ENCODE measurements at regions of chr2 and their contacts with region 1.

Region 1: DNA sequence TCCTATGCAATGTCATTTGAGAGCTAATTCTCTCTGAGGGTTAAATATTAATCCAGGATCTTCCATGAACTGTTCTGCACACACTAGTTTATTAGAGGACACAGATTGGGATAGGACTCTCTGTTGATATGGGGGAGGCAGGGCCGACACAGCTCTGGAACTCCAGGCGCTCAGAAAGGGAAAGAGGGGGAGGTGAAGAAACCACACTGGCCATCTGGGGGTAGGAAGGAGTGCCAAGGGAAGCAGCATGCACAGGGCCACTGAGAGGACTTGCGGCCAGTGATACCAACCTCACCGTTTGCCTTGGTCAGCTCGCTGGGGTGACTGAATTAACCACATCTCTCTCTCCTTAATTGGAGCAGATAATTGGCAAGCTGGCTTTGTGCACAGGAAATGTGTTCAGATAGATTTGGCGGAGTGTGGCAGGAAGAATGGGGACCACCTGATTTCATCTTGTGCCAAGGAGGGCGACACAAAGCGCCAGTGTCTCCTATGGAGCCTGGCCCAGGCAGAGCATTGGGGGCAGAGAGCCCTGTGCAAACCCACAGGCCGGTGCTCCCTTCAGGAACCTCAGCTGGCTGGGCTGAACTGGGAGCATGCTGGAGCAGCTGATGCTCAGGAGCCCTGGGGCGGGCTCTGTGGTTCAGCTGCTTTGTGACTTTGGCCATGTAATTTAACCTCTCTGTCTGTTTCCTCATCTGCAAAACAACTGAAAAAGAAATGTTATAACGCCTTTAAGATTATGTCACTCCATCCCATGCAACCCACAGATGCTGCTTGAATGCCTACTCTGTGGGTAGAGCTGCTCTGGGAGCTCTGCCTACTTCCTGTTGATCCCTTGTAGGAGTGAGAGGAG is 114.7 kb upstream of the STON1 start:
- DNase-seq: no peak
- ATAC-seq: no peak
- H3K4me3 ChIP-seq: no peak overlapping the region
- H3K27ac ChIP-seq: no peak overlapping the region
- H3K4me1 ChIP-seq: no peaks in the 10 kb centered on the region
- H3K27me3 ChIP-seq: no peaks in the 10 kb centered on the region
- CTCF ChIP-seq: no peak
- POLR2A ChIP-seq: no peak

Region 2: GRCh38 chr2:48116497-48116896 is 298.7 kb before region 1 on chr2:
- intact Hi-C with region 1: loop called (anchors 5 kb)
- DNase-seq: no peak
- ATAC-seq: no peak
- H3K4me3 ChIP-seq: no peak overlapping the region
- H3K27ac ChIP-seq: no peak overlapping the region
- H3K4me1 ChIP-seq: peaks cover 14% of the 10 kb centered on the region
- H3K27me3 ChIP-seq: no peaks in the 10 kb centered on the region
- CTCF ChIP-seq: no peak
- POLR2A ChIP-seq: no peak

Region 3: DNA sequence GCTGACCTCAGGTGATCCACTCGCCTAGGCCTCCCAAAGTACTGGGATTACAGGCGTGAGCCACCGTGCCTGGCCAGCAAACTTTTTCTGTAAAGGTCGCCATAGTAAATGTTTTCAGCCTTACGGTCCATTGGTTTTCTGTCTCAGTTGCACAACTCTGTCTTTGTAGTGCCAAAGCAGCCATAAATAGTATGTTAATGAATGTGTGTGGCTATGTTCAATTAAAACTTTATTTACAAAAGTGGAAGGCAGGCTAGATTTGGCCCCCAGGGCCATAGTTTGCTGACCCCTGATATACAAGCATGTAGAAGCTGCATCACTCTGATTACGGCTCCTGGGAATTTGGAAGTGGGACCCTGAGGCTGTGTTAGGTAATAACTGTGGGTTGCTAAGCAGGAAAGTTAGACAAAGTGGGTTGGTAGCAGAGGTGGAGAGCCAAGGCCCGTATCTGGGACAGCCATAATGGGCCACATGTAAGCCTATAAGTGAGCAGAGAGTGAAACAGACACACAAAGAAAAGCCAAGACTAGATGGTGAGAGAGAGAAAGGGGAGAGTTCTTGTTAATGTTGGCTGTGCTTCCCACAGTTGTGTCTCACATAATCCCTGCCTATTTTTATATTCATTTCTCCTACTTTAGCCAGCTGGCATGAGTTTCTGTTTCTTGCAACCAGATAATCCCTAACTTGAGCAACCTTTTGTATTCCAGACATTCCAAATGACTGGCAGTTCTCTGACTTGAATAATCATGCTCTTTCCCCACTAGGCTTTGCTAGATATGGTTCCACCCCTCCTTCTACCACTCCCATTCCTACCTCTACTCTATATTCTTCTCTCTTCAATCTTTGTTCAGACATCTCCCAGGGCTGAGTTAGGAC is 108.6 kb before region 1 on chr2:
- intact Hi-C with region 1: loop called (anchors 10 kb)
- DNase-seq: no peak
- ATAC-seq: no peak
- H3K4me3 ChIP-seq: no peak overlapping the region
- H3K27ac ChIP-seq: no peak overlapping the region
- H3K4me1 ChIP-seq: no peaks in the 10 kb centered on the region
- H3K27me3 ChIP-seq: no peaks in the 10 kb centered on the region
- CTCF ChIP-seq: no peak
- POLR2A ChIP-seq: no peak

Region 4: GRCh38 chr2:48467637-48468036 is 52.4 kb after region 1 on chr2:
- intact Hi-C with region 1: no loop called
- DNase-seq: no peak
- ATAC-seq: no peak
- H3K4me3 ChIP-seq: no peak overlapping the region
- H3K27ac ChIP-seq: no peak overlapping the region
- H3K4me1 ChIP-seq: no peaks in the 10 kb centered on the region
- H3K27me3 ChIP-seq: no peaks in the 10 kb centered on the region
- CTCF ChIP-seq: no peak
- POLR2A ChIP-seq: no peak